Posterior vena cava (tissue), 2 donors: ENCODE measurements at regions of chr16 and their contacts with region 1.

Region 1: DNA sequence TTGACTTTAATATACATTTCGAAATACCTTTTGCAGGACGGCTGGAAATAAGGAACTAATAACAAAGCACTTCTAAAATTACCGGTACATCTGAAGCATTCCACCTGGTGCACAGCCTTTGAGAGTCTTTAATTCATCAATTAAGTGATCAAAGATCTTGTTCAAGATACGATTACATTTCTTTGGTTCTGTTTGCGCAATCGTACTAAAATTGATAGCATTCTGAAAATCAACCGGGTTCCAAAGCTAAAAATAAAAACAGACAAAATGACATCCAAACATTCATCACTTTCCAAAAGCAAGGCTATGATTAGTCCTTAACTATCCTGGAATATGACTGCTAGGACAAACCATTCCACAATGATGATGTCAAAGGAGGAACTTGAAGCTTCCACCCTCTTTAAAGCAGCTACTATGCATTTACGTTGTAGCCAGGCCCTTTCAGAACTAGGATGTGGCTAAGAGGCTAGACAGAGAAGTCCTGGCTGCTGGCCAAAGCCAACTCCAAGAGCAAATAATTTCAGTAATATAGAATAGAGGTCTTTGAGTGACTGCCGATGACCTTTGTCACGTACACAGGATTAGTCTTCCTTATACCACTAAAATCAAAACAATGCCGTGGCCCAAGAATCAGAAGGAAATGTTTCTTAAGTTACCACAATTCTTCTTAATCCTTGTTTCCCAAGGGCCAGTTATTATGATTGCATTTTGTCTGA is 299.8 kb upstream of the PSMD7 start:
- DNase-seq: no peak

Region 2: DNA sequence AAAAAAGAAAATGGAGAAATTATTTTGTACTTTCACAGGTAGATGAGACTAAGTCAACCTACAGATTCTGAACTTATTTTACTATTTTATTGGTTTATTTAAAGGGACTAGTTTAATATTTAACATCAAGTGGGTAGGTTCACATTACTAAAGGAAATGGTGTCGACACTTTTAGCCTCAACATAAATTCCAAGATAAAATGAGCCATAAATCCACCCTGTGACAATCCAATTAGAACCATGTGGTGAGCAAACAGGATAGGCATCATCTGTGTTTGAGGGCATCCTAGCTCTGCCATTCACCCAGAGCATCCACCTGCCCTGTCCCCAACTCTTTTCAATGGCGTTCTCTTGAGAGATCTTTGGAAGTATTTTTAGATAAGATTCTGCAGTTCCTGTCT is 1732.0 kb before region 1 on chr16:
- intact Hi-C with region 1: loop called in 1 of 2 experiments (anchors 5 kb)
- DNase-seq: no peak